ENCODE measurements at regions of chr1 and their contacts with region 1.

Region 1: DNA sequence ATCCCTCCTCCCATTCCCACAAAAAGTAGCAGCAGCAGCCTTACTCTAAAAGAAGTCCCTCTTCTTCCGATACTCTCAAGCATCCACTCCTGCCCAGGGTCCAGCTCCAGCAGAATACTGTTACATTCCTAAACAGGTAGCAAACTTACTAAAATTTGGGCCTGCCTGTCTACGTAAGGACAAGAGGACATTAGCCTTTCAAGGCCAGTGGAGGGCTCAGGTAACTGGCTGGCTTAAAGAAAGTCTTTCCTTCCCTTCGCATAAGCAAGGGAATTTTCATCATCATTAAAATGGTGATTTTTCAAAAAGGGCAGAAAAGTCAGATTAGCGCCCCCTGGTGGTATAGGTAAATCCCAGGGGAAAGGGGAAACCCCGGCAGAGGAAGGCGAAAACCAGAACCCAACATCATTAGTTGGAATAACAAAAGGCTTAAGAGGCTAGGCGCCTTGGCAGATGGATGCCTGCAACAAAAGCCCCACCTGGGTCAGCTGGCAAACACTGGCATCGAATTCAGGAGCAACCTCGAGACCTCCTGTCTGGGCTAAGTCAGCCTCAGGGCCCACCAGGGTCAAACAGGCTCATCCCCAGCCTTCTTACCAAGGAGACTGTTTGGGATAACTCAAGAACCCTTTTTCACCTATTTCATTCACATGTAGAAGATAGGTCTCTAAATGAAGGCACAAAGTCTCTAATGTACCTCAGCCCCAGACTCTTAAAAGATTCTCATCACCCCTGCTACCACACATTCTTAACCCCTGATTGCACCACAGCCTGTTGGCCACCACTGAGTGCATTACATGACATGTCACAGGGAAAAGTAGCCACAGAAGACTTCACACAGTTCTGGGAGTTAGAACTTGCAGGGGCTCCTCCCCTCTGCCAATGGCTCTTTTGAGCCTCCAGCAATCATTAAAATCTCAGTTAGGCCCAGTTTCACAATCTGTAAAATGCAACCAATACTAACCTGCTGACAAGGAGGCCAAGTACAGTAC is 36.7 kb downstream of the ERI3 start:
- DNase-seq: no peak
- H3K4me3 ChIP-seq: no peak overlapping the region
- CTCF ChIP-seq: peak; percentile 45

Region 2: DNA sequence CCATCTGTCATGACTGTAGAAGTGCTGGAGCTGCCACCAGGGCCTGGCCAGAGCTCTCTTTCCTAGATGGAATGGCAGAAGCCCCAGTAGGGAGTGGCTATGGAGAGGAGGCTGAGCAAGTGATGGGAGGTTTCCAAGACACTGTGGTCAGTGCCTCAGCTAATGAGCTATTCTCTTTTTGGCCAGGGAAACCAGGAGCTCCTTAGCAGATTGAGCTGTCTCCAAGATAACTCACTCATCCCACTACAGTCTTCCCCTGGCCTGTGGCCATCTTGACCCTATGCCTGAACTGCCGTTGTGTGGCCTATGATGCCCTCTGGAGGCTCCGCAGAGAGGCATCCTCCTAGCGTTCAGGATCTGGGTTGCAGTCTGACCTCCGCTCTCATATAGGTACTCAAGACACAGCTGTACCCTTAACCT is 23.8 kb before region 1 on chr1:
- CTCF ChIA-PET with region 1: interaction called, 18 read pairs
- POLR2A ChIA-PET with region 1: no interaction called
- DNase-seq: peak; percentile 38
- H3K4me3 ChIP-seq: no peak overlapping the region
- CTCF ChIP-seq: peak; percentile 51

Region 3: DNA sequence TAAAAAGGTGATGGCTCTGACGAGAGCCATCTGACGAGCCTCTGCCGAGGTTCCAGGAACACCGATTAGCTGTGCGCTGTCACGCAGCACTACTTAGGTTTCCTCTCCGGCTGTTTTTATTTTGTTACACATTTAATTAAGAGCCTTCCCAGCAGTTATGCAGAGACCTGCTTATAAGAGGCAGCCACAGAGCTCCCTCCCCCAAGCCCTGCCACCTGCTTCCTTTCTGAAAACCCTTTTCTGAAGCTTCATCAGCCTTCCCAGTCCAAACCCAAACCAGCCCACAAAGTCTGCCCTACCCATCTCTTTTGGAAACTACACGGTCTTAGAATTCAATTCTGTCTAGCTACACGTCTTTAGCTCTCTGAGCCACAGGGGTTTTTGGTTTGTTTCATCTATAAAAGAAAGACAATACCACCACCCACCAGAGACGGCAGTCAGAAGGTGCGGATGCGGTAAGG is 12.4 kb before region 1 on chr1:
- CTCF ChIA-PET with region 1: interaction called, 27 read pairs
- POLR2A ChIA-PET with region 1: no interaction called
- DNase-seq: no peak
- H3K4me3 ChIP-seq: no peak overlapping the region
- CTCF ChIP-seq: no peak